Body of pancreas (tissue), 4 donors: ENCODE measurements at regions of chr22 and their contacts with region 1.

Region 1: DNA sequence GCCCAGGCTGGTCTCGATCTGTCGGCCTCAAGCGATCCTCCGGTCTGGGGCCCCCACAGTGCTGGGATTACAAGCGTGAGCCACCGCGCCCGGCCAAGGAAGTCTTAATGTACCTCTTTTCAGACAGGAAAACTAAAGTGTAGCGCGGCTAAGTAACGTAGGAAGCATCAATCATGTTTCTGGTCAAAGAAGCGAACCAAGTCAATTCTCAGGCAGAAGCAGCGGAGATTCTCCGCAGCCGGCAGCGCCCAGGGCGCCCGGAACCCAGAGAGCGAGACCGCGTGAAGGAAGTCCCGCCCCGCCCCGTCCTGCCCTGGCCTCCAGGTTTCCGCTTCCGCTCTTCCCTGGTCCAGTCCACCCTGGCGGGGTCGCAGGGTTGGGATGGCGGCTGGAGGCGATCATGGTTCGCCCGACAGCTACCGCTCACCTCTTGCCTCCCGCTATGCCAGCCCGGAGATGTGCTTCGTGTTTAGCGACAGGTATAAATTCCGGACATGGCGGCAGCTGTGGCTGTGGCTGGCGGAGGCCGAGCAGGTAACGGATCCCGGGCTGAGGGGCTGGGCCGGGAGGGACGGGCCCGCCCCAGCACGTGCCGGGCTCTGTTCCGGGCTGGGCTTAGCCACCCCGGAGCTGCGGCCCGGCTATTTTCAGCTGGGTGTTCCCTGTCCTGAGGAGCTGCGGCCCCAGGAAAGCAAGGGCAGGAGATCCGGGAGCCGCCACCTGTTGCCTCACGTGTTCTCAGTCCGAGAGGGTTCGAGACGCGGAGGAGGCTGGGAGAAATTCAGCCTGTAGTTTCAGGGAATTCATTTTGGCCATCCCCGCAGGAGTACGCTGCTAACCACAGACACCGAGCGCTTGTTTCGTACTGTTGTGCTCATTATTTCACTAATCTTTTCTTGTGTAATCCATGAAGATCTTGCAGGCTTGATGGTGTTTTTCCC is at the start of gene ADSL:
- DNase-seq: peak; percentile 84 to 90 (median 86)
- ATAC-seq: peak; percentile 95
- H3K4me3 ChIP-seq: peak within 1 kb of the TSS; percentile 49 to 65
- H3K27ac ChIP-seq: peak within 1 kb of the TSS; percentile 30 to 89 (median 76)
- H3K4me1 ChIP-seq: peaks cover 15% of the 10 kb centered on the region
- H3K27me3 ChIP-seq: no peaks in the 10 kb centered on the region
- CTCF ChIP-seq: peak in 4 of 7 experiments; percentile 16 to 40 (median 28)
- POLR2A ChIP-seq: peak; percentile 62 to 91 (median 91)
- total RNA-seq, gene ADSL: 49.0 to 76.5 TPM

Region 2: GRCh38 chr22:40044102-40044869 is 302.2 kb before region 1 on chr22:
- intact Hi-C with region 1: loop called (anchors 10 kb)
- DNase-seq: peak; percentile 97 to 99 (median 98)
- ATAC-seq: peak; percentile 90
- H3K4me3 ChIP-seq: peak overlapping the region in 1 of 2 donors; percentile 87
- H3K27ac ChIP-seq: peak overlapping the region; percentile 84 to 96 (median 93)
- H3K4me1 ChIP-seq: peaks cover 39% of the 10 kb centered on the region
- H3K27me3 ChIP-seq: no peaks in the 10 kb centered on the region
- CTCF ChIP-seq: no peak
- POLR2A ChIP-seq: peak; percentile 46 to 95 (median 93)

Region 3: DNA sequence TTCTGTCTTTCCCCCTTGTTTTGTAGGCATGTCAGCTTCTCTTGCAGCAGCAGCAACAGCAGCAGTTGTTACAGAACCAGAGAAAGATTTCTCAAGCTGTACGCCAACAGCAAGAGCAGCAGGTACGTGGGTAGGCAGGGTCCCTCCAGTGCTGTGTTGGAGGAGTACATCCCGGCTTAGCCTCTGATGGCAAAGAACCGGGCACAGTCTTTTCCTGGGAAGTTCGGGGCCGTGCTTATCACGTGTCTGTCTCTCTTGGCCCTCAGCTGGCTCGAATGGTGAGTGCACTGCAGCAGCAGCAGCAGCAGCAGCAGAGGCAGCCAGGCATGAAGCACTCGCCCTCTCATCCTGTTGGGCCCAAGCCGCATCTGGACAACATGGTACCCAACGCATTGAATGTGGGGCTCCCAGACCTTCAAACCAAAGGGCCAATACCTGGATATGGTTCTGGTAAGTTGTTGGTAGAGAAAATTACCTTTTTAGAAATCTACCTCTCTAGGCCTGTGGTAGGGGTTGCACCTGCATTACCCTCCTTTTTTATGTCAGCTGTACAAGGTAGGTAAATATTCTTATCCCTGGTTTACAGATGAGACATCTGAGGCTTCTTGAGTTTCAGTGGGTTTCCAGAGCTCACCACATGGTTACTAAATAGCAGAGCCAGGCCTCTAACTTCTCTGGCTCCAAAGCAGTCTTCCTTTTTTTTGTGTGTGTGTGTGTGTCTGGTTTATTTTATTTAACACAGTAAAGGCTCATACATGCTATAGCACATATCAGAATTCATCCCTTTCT is 45.4 kb before region 1 on chr22:
- intact Hi-C with region 1: no loop called
- DNase-seq: no peak
- ATAC-seq: no peak
- H3K4me3 ChIP-seq: no peak overlapping the region
- H3K27ac ChIP-seq: no peak overlapping the region
- H3K4me1 ChIP-seq: no peaks in the 10 kb centered on the region
- H3K27me3 ChIP-seq: no peaks in the 10 kb centered on the region
- CTCF ChIP-seq: no peak
- POLR2A ChIP-seq: no peak

Region 4: GRCh38 chr22:40385036-40385782 is 38.8 kb after region 1 on chr22:
- intact Hi-C with region 1: no loop called
- DNase-seq: peak in 1 of 4 donors; percentile 34
- ATAC-seq: no peak
- H3K4me3 ChIP-seq: no peak overlapping the region
- H3K27ac ChIP-seq: peak overlapping the region; percentile 18 to 93 (median 78)
- H3K4me1 ChIP-seq: peaks cover 61% of the 10 kb centered on the region
- H3K27me3 ChIP-seq: no peaks in the 10 kb centered on the region
- CTCF ChIP-seq: no peak
- POLR2A ChIP-seq: peak in 2 of 3 donors; percentile 16 to 23

Region 5: DNA sequence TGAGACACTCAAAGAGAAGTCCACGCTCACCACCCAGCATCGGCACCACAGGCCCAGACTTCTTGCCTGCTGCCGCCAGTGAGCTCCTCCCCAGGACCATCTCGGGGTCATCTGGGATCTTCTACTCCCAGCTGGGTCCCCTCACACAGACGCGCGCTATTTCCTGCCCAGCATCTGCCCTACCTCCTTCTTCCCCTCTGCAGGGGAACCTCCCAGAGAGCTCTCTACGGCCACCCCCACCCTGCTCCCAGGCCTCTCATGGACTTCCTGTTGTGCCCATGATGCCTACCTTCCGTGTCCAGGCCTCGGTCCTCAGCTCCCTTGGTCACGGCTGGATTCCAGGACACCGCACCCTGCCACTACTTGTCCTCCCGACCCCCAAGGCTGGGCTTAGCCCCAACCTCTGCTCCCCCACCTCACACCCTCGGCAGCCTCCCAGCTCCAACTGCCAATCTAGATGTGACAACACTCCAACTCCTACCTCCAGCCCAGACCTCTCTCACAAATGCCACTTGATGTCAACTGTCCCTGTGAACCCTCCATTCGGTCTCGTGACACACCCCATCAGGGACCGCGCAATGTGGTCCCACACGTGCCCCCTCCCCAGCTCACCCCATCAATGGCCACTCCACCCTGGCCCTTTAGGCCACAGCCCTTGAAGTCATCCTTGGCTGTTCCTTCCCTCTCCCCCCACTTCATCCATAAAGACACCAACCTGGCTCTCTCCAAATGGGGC is 69.3 kb after region 1 on chr22:
- intact Hi-C with region 1: no loop called
- DNase-seq: no peak
- ATAC-seq: no peak
- H3K4me3 ChIP-seq: no peak overlapping the region
- H3K27ac ChIP-seq: no peak overlapping the region
- H3K4me1 ChIP-seq: no peaks in the 10 kb centered on the region
- H3K27me3 ChIP-seq: no peaks in the 10 kb centered on the region
- CTCF ChIP-seq: no peak
- POLR2A ChIP-seq: no peak